ENCODE measurements at regions of chr2 and their contacts with region 1.

Region 1: DNA sequence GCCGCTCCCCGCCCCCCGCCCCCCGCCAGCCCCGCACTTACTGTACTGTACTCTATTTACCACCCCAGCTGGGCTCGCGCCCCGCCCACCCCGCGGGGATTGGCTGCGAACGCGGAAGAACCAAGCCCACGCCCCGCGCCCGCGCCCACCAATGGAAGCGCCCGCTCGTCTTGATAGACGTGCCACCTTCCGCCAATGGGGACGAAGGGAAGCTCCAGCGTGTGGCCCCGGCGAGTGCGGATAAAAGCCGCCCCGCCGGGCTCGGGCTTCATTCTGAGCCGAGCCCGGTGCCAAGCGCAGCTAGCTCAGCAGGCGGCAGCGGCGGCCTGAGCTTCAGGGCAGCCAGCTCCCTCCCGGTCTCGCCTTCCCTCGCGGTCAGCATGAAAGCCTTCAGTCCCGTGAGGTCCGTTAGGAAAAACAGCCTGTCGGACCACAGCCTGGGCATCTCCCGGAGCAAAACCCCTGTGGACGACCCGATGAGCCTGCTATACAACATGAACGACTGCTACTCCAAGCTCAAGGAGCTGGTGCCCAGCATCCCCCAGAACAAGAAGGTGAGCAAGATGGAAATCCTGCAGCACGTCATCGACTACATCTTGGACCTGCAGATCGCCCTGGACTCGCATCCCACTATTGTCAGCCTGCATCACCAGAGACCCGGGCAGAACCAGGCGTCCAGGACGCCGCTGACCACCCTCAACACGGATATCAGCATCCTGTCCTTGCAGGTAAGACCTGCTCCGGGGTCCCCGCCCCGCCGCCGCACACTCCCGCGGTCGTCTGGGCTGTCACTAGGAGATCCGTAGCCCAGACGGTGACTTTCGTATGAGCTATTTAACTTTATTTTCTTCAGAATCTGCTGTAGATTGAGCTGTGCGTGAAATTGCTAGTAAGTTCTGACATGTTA is at the start of gene ID2:
- DNase-seq: peak; percentile 98
- ATAC-seq: peak; percentile 68
- H3K4me3 ChIP-seq: peak within 1 kb of the TSS; percentile 87
- H3K27ac ChIP-seq: peak within 1 kb of the TSS; percentile 90
- H3K4me1 ChIP-seq: peaks cover 11% of the 10 kb centered on the region
- H3K27me3 ChIP-seq: no peaks in the 10 kb centered on the region
- CTCF ChIP-seq: 0 out of 2 replicates have a peak, but pooled peaks have one; percentile 5
- POLR2A ChIP-seq: peak; percentile 100
- RAD21 ChIP-seq: peak; percentile 50
- total RNA-seq, gene ID2: 389 and 431 TPM in 2 replicates

Region 2: GRCh38 chr2:7097348-7097895 is 1584.6 kb before region 1 on chr2:
- CTCF ChIA-PET with region 1: no interaction called
- POLR2A ChIA-PET with region 1: no interaction called
- dilution Hi-C with region 1: no loop called
- in situ Hi-C with region 1: loop called (anchors 25 kb)
- intact Hi-C with region 1: loop called (anchors 1 kb)
- DNase-seq: peak; percentile 30
- ATAC-seq: peak; percentile 99
- H3K4me3 ChIP-seq: no peak overlapping the region
- H3K27ac ChIP-seq: no peak overlapping the region
- H3K4me1 ChIP-seq: no peaks in the 10 kb centered on the region
- H3K27me3 ChIP-seq: no peaks in the 10 kb centered on the region
- CTCF ChIP-seq: peak; percentile 88
- POLR2A ChIP-seq: no peak
- RAD21 ChIP-seq: peak; percentile 89

Region 3: DNA sequence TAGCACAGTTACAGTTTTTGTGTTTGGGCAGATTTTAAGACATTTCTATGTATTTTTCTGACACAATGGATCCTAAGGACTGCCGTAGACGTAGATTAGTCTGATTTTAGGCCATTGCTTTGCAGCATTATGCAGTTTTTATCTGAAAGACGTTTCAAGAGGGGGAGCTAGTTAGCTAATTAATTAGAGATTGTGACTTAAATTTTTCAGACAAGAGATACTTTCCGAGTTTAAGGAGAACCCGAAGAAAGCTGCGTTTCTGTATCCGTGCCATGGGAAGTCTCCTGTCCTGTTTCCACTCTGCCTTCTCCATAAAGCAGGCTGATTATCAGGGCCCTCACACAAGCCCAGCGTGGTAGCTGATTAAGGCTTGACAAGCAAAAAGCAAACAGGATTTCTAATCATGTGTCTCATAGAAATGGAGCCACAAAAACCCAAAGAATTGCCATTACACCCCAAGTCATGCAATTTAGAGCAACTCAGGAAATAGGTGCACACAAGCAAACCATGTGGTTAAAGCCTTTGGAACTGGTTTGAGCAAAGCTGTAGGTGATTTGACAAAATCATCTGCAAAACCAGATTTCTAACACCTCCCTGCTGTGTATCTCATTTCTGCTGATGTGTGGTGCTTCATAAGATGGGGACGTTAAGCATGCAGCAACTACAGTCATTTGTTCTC is 956.7 kb before region 1 on chr2:
- CTCF ChIA-PET with region 1: no interaction called
- POLR2A ChIA-PET with region 1: no interaction called
- dilution Hi-C with region 1: no loop called
- in situ Hi-C with region 1: loop called (anchors 5 kb)
- intact Hi-C with region 1: loop called (anchors 1 kb)
- DNase-seq: peak; percentile 26
- ATAC-seq: no peak; the same call in 1 of the 2 replicates
- H3K4me3 ChIP-seq: no peak overlapping the region
- H3K27ac ChIP-seq: no peak overlapping the region
- H3K4me1 ChIP-seq: peaks cover 1% of the 10 kb centered on the region; the same call in 1 of the 2 replicates
- H3K27me3 ChIP-seq: peaks cover 3% of the 10 kb centered on the region
- CTCF ChIP-seq: no peak
- POLR2A ChIP-seq: no peak
- RAD21 ChIP-seq: peak; percentile 29; the same call in 1 of the 2 replicates

Region 4: DNA sequence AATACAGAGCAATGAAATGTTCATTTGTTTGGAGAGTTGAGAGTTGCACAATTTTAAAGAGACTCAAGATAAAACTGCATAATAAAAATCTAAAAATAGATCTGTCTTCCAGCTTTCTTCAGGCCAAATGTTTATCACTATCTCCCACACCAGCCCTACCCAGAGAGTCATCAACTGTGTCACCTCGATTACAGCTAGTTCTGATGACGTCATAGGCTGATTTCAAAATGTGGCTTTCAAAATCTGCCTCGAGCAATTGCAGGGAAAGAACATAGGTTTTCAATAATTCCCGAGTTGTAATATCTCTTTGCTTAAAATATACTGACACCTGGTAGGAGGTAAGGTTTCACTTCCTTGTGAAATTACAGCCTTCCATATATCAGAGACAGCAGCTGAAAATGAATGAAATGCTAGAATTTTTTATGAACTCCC is 677.8 kb before region 1 on chr2:
- CTCF ChIA-PET with region 1: no interaction called
- POLR2A ChIA-PET with region 1: no interaction called
- dilution Hi-C with region 1: no loop called
- in situ Hi-C with region 1: loop called (anchors 10 kb)
- intact Hi-C with region 1: loop called (anchors 5 kb)
- DNase-seq: peak; percentile 93
- ATAC-seq: peak; percentile 65
- H3K4me3 ChIP-seq: no peak overlapping the region
- H3K27ac ChIP-seq: no peak overlapping the region
- H3K4me1 ChIP-seq: peaks cover 4% of the 10 kb centered on the region; the same call in 1 of the 2 replicates
- H3K27me3 ChIP-seq: no peaks in the 10 kb centered on the region
- CTCF ChIP-seq: no peak
- POLR2A ChIP-seq: no peak
- RAD21 ChIP-seq: no peak

Region 5: GRCh38 chr2:8169443-8169842 is 512.6 kb before region 1 on chr2:
- CTCF ChIA-PET with region 1: no interaction called
- POLR2A ChIA-PET with region 1: no interaction called
- dilution Hi-C with region 1: no loop called
- in situ Hi-C with region 1: loop called (anchors 25 kb)
- intact Hi-C with region 1: loop called (anchors 5 kb)
- DNase-seq: peak; percentile 97
- ATAC-seq: peak; percentile 87
- H3K4me3 ChIP-seq: no peak overlapping the region
- H3K27ac ChIP-seq: peak overlapping the region; percentile 57; the same call in 1 of the 2 replicates
- H3K4me1 ChIP-seq: peaks cover 13% of the 10 kb centered on the region
- H3K27me3 ChIP-seq: no peaks in the 10 kb centered on the region
- CTCF ChIP-seq: no peak
- POLR2A ChIP-seq: no peak
- RAD21 ChIP-seq: 0 out of 2 replicates have a peak, but pooled peaks have one; percentile 3

Region 6: DNA sequence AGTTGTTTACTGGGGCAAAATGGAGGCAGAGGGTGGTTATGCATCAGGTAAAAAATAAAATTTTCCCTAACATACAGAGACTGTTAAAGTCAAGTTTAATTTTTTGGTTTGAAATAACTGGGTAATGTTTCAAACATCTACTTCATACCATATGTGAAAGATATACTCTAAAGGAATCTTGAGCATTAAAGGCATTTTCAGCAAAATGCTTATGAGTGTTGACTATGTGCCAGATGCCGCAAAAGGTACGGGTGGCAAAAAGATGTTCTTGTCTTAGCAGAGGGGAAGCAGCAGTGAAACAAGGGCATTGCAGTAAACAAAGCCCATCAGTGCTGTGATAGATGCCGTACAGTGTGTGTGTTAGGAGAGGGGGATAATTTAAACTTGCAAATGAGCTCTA is 263.3 kb before region 1 on chr2:
- CTCF ChIA-PET with region 1: no interaction called
- POLR2A ChIA-PET with region 1: no interaction called
- dilution Hi-C with region 1: no loop called
- in situ Hi-C with region 1: no loop called
- intact Hi-C with region 1: loop called (anchors 2 kb)
- DNase-seq: peak; percentile 66
- ATAC-seq: peak; percentile 70; the same call in 1 of the 2 replicates
- H3K4me3 ChIP-seq: no peak overlapping the region
- H3K27ac ChIP-seq: peak overlapping the region; percentile 72; the same call in 1 of the 2 replicates
- H3K4me1 ChIP-seq: peaks cover 13% of the 10 kb centered on the region
- H3K27me3 ChIP-seq: no peaks in the 10 kb centered on the region; the same call in 1 of the 2 replicates
- CTCF ChIP-seq: no peak
- POLR2A ChIP-seq: no peak
- RAD21 ChIP-seq: no peak

Region 7: DNA sequence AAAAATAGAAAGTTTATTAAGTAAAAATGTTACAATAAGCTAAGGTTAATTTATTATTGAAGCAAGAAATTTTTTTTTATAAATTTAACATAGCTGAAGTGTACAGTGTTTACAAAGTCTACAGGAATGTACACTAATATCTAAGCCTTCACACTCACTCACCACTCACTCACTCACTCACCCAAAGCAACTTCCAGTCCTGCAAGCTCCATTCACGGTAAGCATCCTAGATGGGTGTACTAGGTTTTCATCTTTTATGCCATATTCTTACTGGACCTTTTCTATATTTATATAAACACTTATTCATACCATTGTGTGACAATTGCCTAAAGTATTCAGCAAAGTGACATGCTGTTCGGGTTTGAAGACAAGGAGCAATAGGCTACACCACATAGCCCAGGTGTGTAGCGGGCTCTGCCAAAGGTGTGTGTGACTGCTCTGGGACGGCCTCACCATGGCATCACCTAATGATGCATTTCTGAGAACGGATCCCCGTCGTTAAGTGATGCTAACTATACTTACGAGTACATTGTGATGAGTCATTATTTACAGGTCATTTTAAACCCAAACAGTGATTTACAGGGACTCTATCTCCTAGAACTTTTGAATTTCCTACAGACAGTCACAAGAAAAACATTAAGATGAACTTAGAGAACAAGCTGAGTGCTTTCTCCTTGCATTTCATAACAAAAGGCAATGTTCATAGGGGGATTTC is 76.5 kb before region 1 on chr2:
- CTCF ChIA-PET with region 1: no interaction called
- POLR2A ChIA-PET with region 1: no interaction called
- dilution Hi-C with region 1: no loop called
- in situ Hi-C with region 1: no loop called
- intact Hi-C with region 1: loop called (anchors 2 kb)
- DNase-seq: peak; percentile 85
- ATAC-seq: peak; percentile 79
- H3K4me3 ChIP-seq: no peak overlapping the region
- H3K27ac ChIP-seq: peak overlapping the region; percentile 41; the same call in 1 of the 2 replicates
- H3K4me1 ChIP-seq: peaks cover 18% of the 10 kb centered on the region
- H3K27me3 ChIP-seq: no peaks in the 10 kb centered on the region
- CTCF ChIP-seq: no peak
- POLR2A ChIP-seq: no peak
- RAD21 ChIP-seq: peak; percentile 8; the same call in 1 of the 2 replicates

Measured in IMR-90 (cell line).